Endothelial cell of umbilical vein (primary cell): ENCODE measurements at regions of chr2 and their contacts with region 1.

Region 1: DNA sequence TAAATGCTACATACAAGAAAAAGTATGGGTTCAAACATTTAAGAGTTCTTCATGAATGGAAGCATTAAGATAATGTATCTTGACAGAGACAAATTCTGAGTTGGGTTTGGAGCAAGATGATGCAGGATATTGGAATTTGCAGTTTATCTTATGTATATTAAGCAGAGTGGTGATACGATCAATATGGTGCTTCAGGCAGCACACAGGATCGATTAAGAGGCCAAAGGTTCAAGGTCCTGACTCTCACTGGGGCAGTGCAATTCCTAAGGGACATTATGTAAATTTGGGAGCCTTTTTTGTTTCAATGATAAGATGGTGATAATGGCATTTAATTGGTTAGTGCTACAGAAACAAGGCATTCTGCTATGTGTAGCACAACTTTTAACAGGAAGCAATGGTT is 381.9 kb downstream of the KCNJ3 start:
- DNase-seq: no peak
- H3K4me3 ChIP-seq: no peak overlapping the region
- H3K27ac ChIP-seq: no peak overlapping the region
- H3K4me1 ChIP-seq: no peaks in the 10 kb centered on the region
- H3K27me3 ChIP-seq: no peaks in the 10 kb centered on the region
- CTCF ChIP-seq: no peak
- POLR2A ChIP-seq: no peak

Region 2: GRCh38 chr2:154223726-154224125 is 856.6 kb before region 1 on chr2:
- CTCF ChIA-PET with region 1: no interaction called
- POLR2A ChIA-PET with region 1: no interaction called
- dilution Hi-C with region 1: no loop called
- intact Hi-C with region 1: no loop called
- DNase-seq: no peak
- H3K4me3 ChIP-seq: no peak overlapping the region
- H3K27ac ChIP-seq: no peak overlapping the region
- H3K4me1 ChIP-seq: peaks cover 1% of the 10 kb centered on the region
- H3K27me3 ChIP-seq: no peaks in the 10 kb centered on the region
- CTCF ChIP-seq: no peak
- POLR2A ChIP-seq: no peak

Region 3: GRCh38 chr2:154914561-154914960 is 165.8 kb before region 1 on chr2:
- CTCF ChIA-PET with region 1: no interaction called
- POLR2A ChIA-PET with region 1: no interaction called
- dilution Hi-C with region 1: no loop called
- intact Hi-C with region 1: no loop called
- DNase-seq: no peak
- H3K4me3 ChIP-seq: no peak overlapping the region
- H3K27ac ChIP-seq: no peak overlapping the region
- H3K4me1 ChIP-seq: no peaks in the 10 kb centered on the region
- H3K27me3 ChIP-seq: no peaks in the 10 kb centered on the region
- CTCF ChIP-seq: no peak
- POLR2A ChIP-seq: no peak

Region 4: DNA sequence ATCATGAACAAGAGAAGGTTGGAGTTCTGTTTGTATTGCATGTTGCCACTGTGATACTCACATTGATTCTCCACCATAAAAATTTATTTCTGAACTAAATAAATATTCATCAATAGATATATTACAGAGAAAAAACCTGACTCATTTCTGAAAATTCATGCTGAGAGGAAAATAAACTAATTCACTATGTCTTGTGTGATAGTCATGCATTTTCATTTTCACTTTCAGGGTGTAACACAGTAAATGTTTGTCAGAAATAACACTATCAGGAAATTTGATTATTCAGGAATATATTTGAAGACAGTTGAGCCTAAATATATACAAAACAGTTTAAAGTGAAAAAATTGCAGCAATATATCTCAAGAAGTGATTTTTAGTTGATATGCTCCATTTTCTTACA is 46.7 kb before region 1 on chr2:
- CTCF ChIA-PET with region 1: no interaction called
- POLR2A ChIA-PET with region 1: no interaction called
- dilution Hi-C with region 1: no loop called
- intact Hi-C with region 1: loop called (anchors 2 kb)
- DNase-seq: no peak
- H3K4me3 ChIP-seq: no peak overlapping the region
- H3K27ac ChIP-seq: no peak overlapping the region
- H3K4me1 ChIP-seq: no peaks in the 10 kb centered on the region
- H3K27me3 ChIP-seq: no peaks in the 10 kb centered on the region
- CTCF ChIP-seq: no peak
- POLR2A ChIP-seq: no peak

Region 5: GRCh38 chr2:155115846-155116245 is 35.5 kb after region 1 on chr2:
- CTCF ChIA-PET with region 1: no interaction called
- POLR2A ChIA-PET with region 1: no interaction called
- dilution Hi-C with region 1: no loop called
- intact Hi-C with region 1: no loop called
- DNase-seq: no peak
- H3K4me3 ChIP-seq: no peak overlapping the region
- H3K27ac ChIP-seq: no peak overlapping the region
- H3K4me1 ChIP-seq: no peaks in the 10 kb centered on the region
- H3K27me3 ChIP-seq: no peaks in the 10 kb centered on the region
- CTCF ChIP-seq: no peak
- POLR2A ChIP-seq: no peak